ENCODE measurements at regions of chr5 and their contacts with region 1.

Region 1: GRCh38 chr5:170791325-170791954 is 7.9 kb downstream of the GABRP start:
- H3K4me3 ChIP-seq: no peak overlapping the region
- H3K27ac ChIP-seq: no peak overlapping the region
- H3K4me1 ChIP-seq: no peaks in the 10 kb centered on the region
- CTCF ChIP-seq: peak; percentile 69

Region 2: GRCh38 chr5:170638454-170639220 is 152.8 kb before region 1 on chr5:
- CTCF ChIA-PET with region 1: interaction called, 74 read pairs
- POLR2A ChIA-PET with region 1: no interaction called
- H3K4me3 ChIP-seq: no peak overlapping the region
- H3K27ac ChIP-seq: no peak overlapping the region
- H3K4me1 ChIP-seq: peaks cover 6% of the 10 kb centered on the region
- CTCF ChIP-seq: peak; percentile 80

Region 3: DNA sequence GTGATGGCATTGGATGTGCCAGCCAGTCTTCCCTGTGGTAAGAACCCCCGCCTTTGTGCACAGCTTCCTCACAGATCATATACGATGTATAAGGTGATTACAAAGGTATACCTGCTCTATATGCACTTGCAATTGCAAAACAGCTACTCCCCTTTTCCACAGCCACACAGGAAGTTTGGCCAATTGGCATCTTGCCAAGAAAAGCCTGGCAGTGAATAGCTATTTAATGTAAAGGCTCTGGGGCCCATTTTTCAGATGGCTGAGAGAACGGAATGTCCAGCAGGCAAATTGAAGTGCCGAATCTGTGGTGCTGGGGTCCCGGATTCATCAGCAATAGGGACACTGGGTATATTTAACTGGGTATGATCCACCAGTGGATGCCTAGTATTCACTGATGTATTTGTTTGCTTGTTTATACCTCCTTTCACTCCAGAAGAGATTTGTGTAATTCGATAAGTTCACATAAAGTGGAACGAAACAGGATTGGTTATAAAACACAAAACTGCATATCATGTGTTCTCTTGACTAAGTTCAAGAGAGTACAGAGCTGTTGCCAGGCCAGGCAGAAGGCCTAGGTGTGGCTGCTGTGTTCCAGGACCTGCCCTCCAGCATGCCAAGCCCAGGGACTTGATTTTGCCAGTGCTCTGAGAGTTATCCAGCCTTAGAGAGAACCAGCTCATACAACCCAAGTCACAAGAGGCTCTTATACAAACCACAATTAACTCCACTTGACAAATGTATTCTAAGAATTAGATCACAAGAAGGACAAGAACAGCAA is 35.6 kb before region 1 on chr5:
- CTCF ChIA-PET with region 1: interaction called, 253 read pairs
- POLR2A ChIA-PET with region 1: no interaction called
- H3K4me3 ChIP-seq: no peak overlapping the region
- H3K27ac ChIP-seq: no peak overlapping the region; the same call in 1 of the 2 replicates
- H3K4me1 ChIP-seq: peaks cover 8% of the 10 kb centered on the region
- CTCF ChIP-seq: no peak

Region 4: DNA sequence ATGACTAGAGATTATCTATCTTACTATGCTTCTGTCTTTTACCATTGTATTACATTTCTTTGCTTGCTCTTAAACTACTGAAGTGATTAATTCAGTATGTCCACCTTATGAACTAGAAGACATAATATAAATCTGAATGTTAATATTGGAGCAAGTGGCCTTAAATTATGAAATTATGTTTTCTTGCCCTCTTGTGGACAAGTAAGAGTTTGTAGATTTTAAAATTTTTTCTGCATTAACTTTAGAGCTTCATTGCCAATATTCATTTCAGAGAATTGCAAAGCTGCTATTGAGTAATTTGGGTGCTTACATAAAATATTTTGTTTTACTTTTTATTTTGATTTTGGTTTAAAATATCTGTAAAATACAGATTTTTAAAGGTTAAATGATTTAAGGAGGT is 125.7 kb after region 1 on chr5:
- CTCF ChIA-PET with region 1: no interaction called
- POLR2A ChIA-PET with region 1: no interaction called
- H3K4me3 ChIP-seq: no peak overlapping the region
- H3K27ac ChIP-seq: no peak overlapping the region
- H3K4me1 ChIP-seq: no peaks in the 10 kb centered on the region
- CTCF ChIP-seq: no peak

Region 5: DNA sequence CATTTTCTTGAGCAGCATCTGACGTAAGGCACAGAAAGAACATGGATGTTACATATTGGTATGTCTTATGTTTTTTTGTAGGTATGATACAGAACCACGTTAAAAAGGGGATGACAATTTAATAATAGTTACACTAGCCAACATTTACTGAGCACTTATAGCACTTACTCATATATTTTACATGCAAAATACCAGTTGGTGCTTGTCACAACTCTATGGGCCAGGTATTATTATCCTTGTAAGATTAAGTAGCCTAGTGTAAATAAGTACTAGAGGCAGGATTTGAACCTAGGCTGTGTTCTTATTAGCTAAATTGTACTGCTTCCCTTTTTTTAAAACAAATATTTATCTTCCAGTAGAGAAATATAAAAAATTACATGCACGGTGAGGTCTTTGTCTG is 153.8 kb after region 1 on chr5:
- CTCF ChIA-PET with region 1: no interaction called
- POLR2A ChIA-PET with region 1: no interaction called
- H3K4me3 ChIP-seq: no peak overlapping the region
- H3K27ac ChIP-seq: no peak overlapping the region
- H3K4me1 ChIP-seq: no peaks in the 10 kb centered on the region
- CTCF ChIP-seq: no peak